SK-N-SH (cell line): ENCODE measurements at regions of chr11 and their contacts with region 1.

Region 1: DNA sequence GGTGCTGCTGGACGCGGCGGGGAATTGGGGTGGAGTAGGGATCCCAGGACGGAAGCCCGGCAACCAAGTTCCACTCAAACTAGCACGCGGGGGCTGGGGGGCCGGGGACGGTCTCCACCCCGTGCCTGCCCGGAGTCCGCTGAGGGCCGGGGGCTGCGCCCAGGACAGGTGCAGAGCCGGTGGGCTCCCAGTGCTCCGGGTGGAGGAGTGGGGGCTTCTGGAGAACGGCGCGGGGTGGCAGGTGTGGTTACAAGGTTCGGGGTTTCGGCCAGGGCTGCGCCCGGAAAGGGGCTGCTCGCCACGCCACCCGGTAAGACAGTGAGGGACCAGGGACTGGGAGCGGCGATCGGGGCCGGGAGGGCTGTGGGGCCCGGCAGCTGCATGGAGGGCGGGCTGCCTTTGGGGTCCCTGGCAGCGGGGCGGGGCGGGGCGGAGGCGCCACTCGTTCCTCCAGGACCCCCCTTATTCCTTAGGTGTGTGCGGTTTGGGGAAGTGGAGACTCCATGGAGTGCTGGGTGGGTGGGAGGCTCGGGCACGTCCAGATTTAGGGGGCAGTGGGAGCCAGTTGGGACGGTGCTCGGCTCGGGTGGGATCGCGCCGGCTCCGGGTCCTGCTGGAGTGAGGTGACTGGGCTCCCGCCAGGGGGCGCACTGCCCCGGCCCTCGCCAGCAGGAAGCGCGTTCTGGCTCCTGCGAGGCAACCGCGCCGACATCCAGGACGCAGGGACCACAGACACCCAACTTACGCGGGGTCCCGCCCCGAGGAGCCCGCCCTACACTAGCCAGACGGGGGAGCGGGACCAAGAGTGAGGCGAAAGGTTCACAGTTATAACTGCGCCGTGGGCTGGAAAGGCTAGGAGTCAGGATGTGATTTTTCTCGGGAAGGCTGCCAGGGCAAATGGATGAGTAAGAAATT is 868 bp downstream of the TSPAN18 start:
- DNase-seq: peak; percentile 92
- H3K4me3 ChIP-seq: peak overlapping the region; percentile 61 to 62
- H3K27ac ChIP-seq: peak overlapping the region in 1 of 2 experiments; percentile 92; a peak in 2 of 4 replicates
- H3K4me1 ChIP-seq: peaks cover 5 to 56% of the 10 kb centered on the region in 2 experiments; a peak in 3 of 4 replicates
- H3K27me3 ChIP-seq: peaks cover 25% of the 10 kb centered on the region; the same call in 1 of the 2 replicates
- CTCF ChIP-seq: peak; percentile 80
- EP300 ChIP-seq: no peak
- RAD21 ChIP-seq: peak; percentile 85

Region 2: GRCh38 chr11:44634401-44635281 is 93.0 kb before region 1 on chr11:
- CTCF ChIA-PET with region 1: interaction called, 14 read pairs
- POLR2A ChIA-PET with region 1: interaction called, 3 read pairs
- DNase-seq: peak; percentile 90
- H3K4me3 ChIP-seq: peak overlapping the region; percentile 1 to 10; a peak in 1 of 4 replicates
- H3K27ac ChIP-seq: peak overlapping the region in 1 of 2 experiments; percentile 80; a peak in 2 of 4 replicates
- H3K4me1 ChIP-seq: peaks cover 5 to 20% of the 10 kb centered on the region in 2 experiments; a peak in 2 of 4 replicates
- H3K27me3 ChIP-seq: peaks cover 3% of the 10 kb centered on the region; the same call in 1 of the 2 replicates
- CTCF ChIP-seq: no peak
- EP300 ChIP-seq: no peak; a peak in 1 of 4 replicates
- RAD21 ChIP-seq: no peak; the same call in 1 of the 2 replicates

Region 3: GRCh38 chr11:44711108-44711786 is 16.4 kb before region 1 on chr11:
- CTCF ChIA-PET with region 1: interaction called, 13 read pairs
- POLR2A ChIA-PET with region 1: interaction called, 7 read pairs
- DNase-seq: peak; percentile 87
- H3K4me3 ChIP-seq: no peak overlapping the region
- H3K27ac ChIP-seq: peak overlapping the region in 1 of 2 experiments; percentile 92; a peak in 2 of 4 replicates
- H3K4me1 ChIP-seq: peaks cover 0 to 23% of the 10 kb centered on the region in 2 experiments; a peak in 3 of 4 replicates
- H3K27me3 ChIP-seq: peaks cover 9% of the 10 kb centered on the region
- CTCF ChIP-seq: no peak
- EP300 ChIP-seq: no peak; a peak in 1 of 4 replicates
- RAD21 ChIP-seq: peak; percentile 28

Region 4: GRCh38 chr11:44755556-44756523 is 28.2 kb after region 1 on chr11:
- CTCF ChIA-PET with region 1: interaction called, 11 read pairs
- POLR2A ChIA-PET with region 1: interaction called, 18 read pairs
- DNase-seq: peak; percentile 42
- H3K4me3 ChIP-seq: no peak overlapping the region; a peak in 1 of 4 replicates
- H3K27ac ChIP-seq: peak overlapping the region; percentile 23 to 100; a peak in 3 of 4 replicates
- H3K4me1 ChIP-seq: peaks cover 16 to 53% of the 10 kb centered on the region in 2 experiments; a peak in 3 of 4 replicates
- H3K27me3 ChIP-seq: no peaks in the 10 kb centered on the region; the same call in 1 of the 2 replicates
- CTCF ChIP-seq: no peak
- EP300 ChIP-seq: peak; percentile 55 to 58; a peak in 2 of 4 replicates
- RAD21 ChIP-seq: peak; percentile 34; the same call in 1 of the 2 replicates